PC-9 (cell line): ENCODE measurements at regions of chr4 and their contacts with region 1.

Region 1: DNA sequence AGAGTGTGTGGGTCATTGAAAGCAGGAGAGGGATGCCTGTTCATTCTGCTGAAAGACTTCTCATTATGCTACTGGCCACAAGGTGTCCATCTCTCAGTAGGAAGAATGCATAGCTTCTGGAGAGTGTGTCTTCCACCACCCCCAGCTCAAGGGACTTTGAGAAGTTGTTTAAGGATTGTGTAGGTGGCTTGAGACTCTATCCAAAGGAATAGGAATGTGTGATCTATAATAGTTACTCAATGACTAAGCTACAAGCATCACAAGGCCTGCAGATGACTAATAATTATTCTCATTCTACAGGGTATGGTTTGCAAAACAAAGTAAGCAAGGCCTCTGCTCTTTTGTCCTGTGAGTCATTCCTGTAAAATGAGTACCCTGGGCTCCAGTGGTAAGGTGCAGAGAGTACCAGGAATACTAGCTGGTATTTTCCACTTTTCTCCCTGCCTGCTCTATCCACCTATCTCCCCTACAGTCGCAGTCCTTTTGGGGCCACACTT is 279.8 kb upstream of the BOD1L1 start:
- DNase-seq: peak; percentile 63 to 99
- H3K4me3 ChIP-seq: no peak overlapping the region
- H3K27ac ChIP-seq: peak overlapping the region; percentile 94
- H3K4me1 ChIP-seq: peaks cover 25% of the 10 kb centered on the region
- H3K27me3 ChIP-seq: no peaks in the 10 kb centered on the region
- CTCF ChIP-seq: peak; percentile 61

Region 2: GRCh38 chr4:13701937-13702446 is 205.3 kb before region 1 on chr4:
- CTCF ChIA-PET with region 1: no interaction called
- POLR2A ChIA-PET with region 1: no interaction called
- intact Hi-C with region 1: loop called (anchors 1 kb)
- DNase-seq: peak; percentile 65 to 94
- H3K4me3 ChIP-seq: no peak overlapping the region
- H3K27ac ChIP-seq: peak overlapping the region; percentile 97
- H3K4me1 ChIP-seq: peaks cover 63% of the 10 kb centered on the region
- H3K27me3 ChIP-seq: no peaks in the 10 kb centered on the region
- CTCF ChIP-seq: no peak

Region 3: GRCh38 chr4:13920901-13921300 is 13.6 kb after region 1 on chr4:
- CTCF ChIA-PET with region 1: interaction called, 15 read pairs
- POLR2A ChIA-PET with region 1: no interaction called
- intact Hi-C with region 1: loop called (anchors 1 kb)
- DNase-seq: peak; percentile 78 to 97
- H3K4me3 ChIP-seq: no peak overlapping the region
- H3K27ac ChIP-seq: peak overlapping the region; percentile 99
- H3K4me1 ChIP-seq: peaks cover 37% of the 10 kb centered on the region
- H3K27me3 ChIP-seq: no peaks in the 10 kb centered on the region
- CTCF ChIP-seq: no peak

Region 4: DNA sequence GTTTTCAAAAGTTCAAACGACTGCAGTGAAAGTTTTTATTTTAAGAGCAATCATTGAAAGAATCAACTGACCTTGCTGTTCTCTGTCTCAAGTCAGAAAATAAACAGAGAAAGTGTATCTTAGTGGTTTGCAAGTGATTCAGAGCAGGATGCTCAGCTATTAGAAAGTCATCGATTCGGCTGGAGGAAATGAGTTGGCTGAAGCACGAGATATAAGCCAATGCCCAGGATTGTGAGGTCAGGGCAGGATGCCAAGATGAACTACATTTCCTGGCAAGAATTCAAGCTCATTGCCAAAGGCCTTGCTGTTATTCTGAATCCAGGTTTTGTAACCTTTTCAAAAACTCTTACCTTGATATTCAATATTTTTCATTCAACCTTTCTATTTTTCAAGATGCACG is 261.6 kb after region 1 on chr4:
- CTCF ChIA-PET with region 1: no interaction called
- POLR2A ChIA-PET with region 1: no interaction called
- intact Hi-C with region 1: loop called (anchors 1 kb)
- DNase-seq: peak; percentile 77 to 93
- H3K4me3 ChIP-seq: peak overlapping the region; percentile 41; the same call in 1 of the 2 replicates
- H3K27ac ChIP-seq: peak overlapping the region; percentile 99
- H3K4me1 ChIP-seq: peaks cover 37% of the 10 kb centered on the region
- H3K27me3 ChIP-seq: no peaks in the 10 kb centered on the region
- CTCF ChIP-seq: no peak

Region 5: GRCh38 chr4:14726441-14727405 is 819.4 kb after region 1 on chr4:
- CTCF ChIA-PET with region 1: no interaction called
- POLR2A ChIA-PET with region 1: no interaction called
- intact Hi-C with region 1: loop called (anchors 5 kb)
- DNase-seq: peak; percentile 70 to 89
- H3K4me3 ChIP-seq: peak overlapping the region; percentile 4; the same call in 1 of the 2 replicates
- H3K27ac ChIP-seq: peak overlapping the region; percentile 61
- H3K4me1 ChIP-seq: peaks cover 18% of the 10 kb centered on the region
- H3K27me3 ChIP-seq: no peaks in the 10 kb centered on the region
- CTCF ChIP-seq: no peak